Endothelial cell of umbilical vein (primary cell): ENCODE measurements at regions of chr5 and their contacts with region 1.

Region 1: DNA sequence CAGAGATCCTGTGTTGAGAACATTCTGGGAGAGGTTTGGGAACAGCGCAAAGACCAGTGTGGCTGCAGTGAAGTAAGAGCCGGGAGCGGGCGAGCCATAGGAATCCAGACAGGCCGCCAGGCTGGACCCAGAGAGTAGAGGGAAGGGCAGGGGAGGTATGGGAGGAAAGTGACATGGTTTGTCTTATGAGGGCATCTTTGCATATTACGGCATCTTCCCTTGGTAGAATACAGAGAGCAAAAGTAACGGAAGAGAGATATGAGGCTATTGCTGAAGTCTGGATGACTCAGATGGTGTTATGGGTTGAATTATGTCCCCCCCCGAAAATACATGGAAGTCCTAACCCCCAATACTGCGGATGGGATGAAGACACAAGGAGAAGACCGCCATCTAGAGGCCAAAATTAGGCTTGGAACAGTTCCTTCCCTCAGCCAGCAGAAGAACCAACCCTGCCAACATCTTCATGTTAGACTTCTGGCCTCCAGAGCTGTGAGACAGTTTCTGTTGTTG is 268.2 kb downstream of the MAST4 start:
- DNase-seq: peak; percentile 86
- H3K4me3 ChIP-seq: no peak overlapping the region
- H3K27ac ChIP-seq: peak overlapping the region; percentile 19
- H3K4me1 ChIP-seq: peaks cover 42% of the 10 kb centered on the region
- H3K27me3 ChIP-seq: no peaks in the 10 kb centered on the region
- CTCF ChIP-seq: peak; percentile 42 to 67
- POLR2A ChIP-seq: peak; percentile 39

Region 2: GRCh38 chr5:66779528-66779927 is 84.9 kb before region 1 on chr5:
- CTCF ChIA-PET with region 1: no interaction called
- POLR2A ChIA-PET with region 1: no interaction called
- dilution Hi-C with region 1: no loop called
- intact Hi-C with region 1: no loop called
- DNase-seq: no peak
- H3K4me3 ChIP-seq: no peak overlapping the region
- H3K27ac ChIP-seq: no peak overlapping the region
- H3K4me1 ChIP-seq: no peaks in the 10 kb centered on the region
- H3K27me3 ChIP-seq: peaks cover 13 to 14% of the 10 kb centered on the region in 2 experiments
- CTCF ChIP-seq: no peak
- POLR2A ChIP-seq: no peak

Region 3: DNA sequence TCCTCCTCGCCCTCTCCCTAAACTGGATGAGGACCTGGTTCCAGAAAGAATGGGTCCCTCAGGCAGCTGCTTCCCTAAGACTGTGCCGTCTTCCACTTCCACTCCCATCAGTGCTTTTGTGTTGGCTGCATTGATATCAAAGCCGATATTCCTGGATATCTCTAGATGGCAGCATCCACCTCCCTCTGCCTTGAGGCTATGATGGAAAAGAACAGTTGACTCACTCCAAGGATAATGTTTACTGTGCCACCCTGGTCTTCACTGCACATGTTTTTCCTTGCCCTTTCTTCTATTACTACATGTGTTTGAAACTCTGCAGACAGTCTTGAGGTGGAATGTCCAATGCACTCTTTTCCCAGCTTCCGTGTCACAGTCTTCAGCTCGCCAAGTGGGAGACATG is 56.6 kb before region 1 on chr5:
- CTCF ChIA-PET with region 1: interaction called, 123 read pairs
- POLR2A ChIA-PET with region 1: no interaction called
- dilution Hi-C with region 1: no loop called
- intact Hi-C with region 1: loop called (anchors 1 kb)
- DNase-seq: peak; percentile 75
- H3K4me3 ChIP-seq: no peak overlapping the region
- H3K27ac ChIP-seq: no peak overlapping the region
- H3K4me1 ChIP-seq: no peaks in the 10 kb centered on the region
- H3K27me3 ChIP-seq: peaks cover 9 to 10% of the 10 kb centered on the region in 2 experiments
- CTCF ChIP-seq: peak; percentile 62 to 69
- POLR2A ChIP-seq: no peak

Region 4: DNA sequence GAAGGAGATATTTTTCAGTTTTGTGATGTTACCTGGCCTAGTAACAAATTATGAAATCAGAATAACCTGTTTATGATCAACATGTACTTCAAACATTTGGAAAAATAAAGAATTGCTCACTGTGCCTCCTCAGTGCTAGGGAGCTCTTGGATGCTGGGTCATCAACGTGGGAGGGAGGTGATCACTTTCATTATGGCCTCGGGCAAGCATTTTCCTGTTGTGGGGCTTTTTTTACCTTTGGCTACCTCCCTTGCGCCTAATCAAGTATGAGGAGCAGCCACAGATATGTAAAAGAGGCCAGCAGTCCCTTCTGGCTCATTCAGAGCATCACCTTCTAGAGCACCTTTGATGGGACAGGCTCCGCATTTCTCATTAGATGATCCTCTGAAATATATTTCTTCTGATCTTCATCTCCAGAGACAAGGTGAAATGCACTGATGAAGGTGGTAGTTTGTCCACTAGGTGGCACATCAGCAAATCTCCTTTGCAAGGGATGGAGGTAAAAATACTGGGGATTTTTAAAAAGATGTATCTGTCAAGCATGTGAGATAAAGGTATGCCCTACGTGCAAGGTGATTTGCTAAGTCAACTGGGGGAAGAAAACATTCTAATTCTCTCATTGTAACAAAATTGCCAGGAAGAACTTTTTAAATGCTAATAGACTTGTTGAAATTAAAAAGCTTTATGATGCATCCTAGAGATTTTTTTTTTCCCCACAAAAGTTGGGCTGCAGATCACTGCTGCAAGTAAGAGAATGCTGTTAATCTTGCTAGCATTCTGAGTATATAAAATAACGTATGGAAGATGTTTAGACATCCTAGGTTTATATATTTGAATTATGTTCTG is 50.0 kb before region 1 on chr5:
- CTCF ChIA-PET with region 1: interaction called, 123 read pairs
- POLR2A ChIA-PET with region 1: no interaction called
- dilution Hi-C with region 1: no loop called
- intact Hi-C with region 1: loop called (anchors 1 kb)
- DNase-seq: peak; percentile 63
- H3K4me3 ChIP-seq: no peak overlapping the region
- H3K27ac ChIP-seq: no peak overlapping the region
- H3K4me1 ChIP-seq: no peaks in the 10 kb centered on the region
- H3K27me3 ChIP-seq: peaks cover 0 to 2% of the 10 kb centered on the region in 2 experiments
- CTCF ChIP-seq: peak; percentile 62 to 75
- POLR2A ChIP-seq: no peak

Region 5: DNA sequence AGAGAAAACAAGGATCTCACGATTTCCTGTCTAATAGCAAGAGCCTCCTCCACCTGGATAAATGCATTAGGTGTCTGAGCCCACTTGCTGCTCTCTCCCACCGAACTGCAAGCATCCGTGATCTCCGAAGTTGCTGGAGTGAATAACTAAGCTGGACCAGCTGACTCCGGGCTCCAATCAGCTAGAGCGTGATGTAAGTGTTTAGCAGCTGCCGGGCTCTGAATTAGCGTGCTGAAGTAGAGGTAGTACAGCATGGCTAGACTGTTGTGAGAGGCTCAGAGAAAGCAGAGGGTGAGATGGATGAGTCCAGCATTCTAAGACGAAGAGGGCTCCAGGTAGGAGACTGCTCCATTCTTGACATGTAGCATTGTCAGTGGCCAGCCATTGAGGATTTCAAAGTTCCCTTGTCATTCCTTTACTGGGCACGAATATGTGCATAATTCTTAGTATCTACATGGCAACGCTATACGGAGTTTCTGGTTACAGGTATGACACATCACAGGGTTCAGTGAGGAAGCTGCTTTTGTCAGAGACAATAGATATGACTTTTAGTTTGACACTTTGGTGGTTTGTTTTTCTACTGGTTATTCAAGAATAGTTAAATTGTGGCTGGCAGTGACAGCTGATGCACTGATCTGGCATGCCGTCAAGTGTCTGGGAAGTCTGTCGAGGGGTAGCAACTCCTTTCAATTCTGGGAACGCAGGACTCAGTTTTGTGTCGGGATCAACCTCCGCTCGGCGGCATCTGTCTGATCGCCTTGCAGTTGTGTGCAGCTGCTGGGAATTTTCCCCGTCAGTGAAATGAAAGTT is 35.6 kb before region 1 on chr5:
- CTCF ChIA-PET with region 1: interaction called, 11 read pairs
- POLR2A ChIA-PET with region 1: interaction called, 27 read pairs
- dilution Hi-C with region 1: no loop called
- intact Hi-C with region 1: loop called (anchors 1 kb)
- DNase-seq: peak; percentile 92
- H3K4me3 ChIP-seq: peak overlapping the region; percentile 54 to 70 (median 55)
- H3K27ac ChIP-seq: peak overlapping the region; percentile 91
- H3K4me1 ChIP-seq: peaks cover 22% of the 10 kb centered on the region
- H3K27me3 ChIP-seq: no peaks in the 10 kb centered on the region
- CTCF ChIP-seq: no peak
- POLR2A ChIP-seq: peak; percentile 95

Region 6: GRCh38 chr5:66840511-66841013 is 23.8 kb before region 1 on chr5:
- CTCF ChIA-PET with region 1: interaction called, 9 read pairs
- POLR2A ChIA-PET with region 1: no interaction called
- dilution Hi-C with region 1: no loop called
- intact Hi-C with region 1: loop called (anchors 2 kb)
- DNase-seq: no peak
- H3K4me3 ChIP-seq: no peak overlapping the region
- H3K27ac ChIP-seq: no peak overlapping the region
- H3K4me1 ChIP-seq: peaks cover 29% of the 10 kb centered on the region
- H3K27me3 ChIP-seq: no peaks in the 10 kb centered on the region
- CTCF ChIP-seq: no peak
- POLR2A ChIP-seq: no peak

Region 7: GRCh38 chr5:66849803-66850202 is 14.6 kb before region 1 on chr5:
- CTCF ChIA-PET with region 1: interaction called, 12 read pairs
- POLR2A ChIA-PET with region 1: interaction called, 7 read pairs
- dilution Hi-C with region 1: no loop called
- intact Hi-C with region 1: loop called (anchors 1 kb)
- DNase-seq: peak; percentile 54
- H3K4me3 ChIP-seq: no peak overlapping the region
- H3K27ac ChIP-seq: peak overlapping the region; percentile 78
- H3K4me1 ChIP-seq: peaks cover 37% of the 10 kb centered on the region
- H3K27me3 ChIP-seq: no peaks in the 10 kb centered on the region
- CTCF ChIP-seq: no peak
- POLR2A ChIP-seq: no peak

Region 8: GRCh38 chr5:66963559-66963971 is 99.2 kb after region 1 on chr5:
- CTCF ChIA-PET with region 1: no interaction called
- POLR2A ChIA-PET with region 1: no interaction called
- dilution Hi-C with region 1: no loop called
- intact Hi-C with region 1: no loop called
- DNase-seq: no peak
- H3K4me3 ChIP-seq: no peak overlapping the region
- H3K27ac ChIP-seq: no peak overlapping the region
- H3K4me1 ChIP-seq: peaks cover 19% of the 10 kb centered on the region
- H3K27me3 ChIP-seq: no peaks in the 10 kb centered on the region
- CTCF ChIP-seq: no peak
- POLR2A ChIP-seq: no peak

Region 9: GRCh38 chr5:67085616-67086015 is 221.2 kb after region 1 on chr5:
- CTCF ChIA-PET with region 1: no interaction called
- POLR2A ChIA-PET with region 1: no interaction called
- dilution Hi-C with region 1: no loop called
- intact Hi-C with region 1: no loop called
- DNase-seq: no peak
- H3K4me3 ChIP-seq: no peak overlapping the region
- H3K27ac ChIP-seq: no peak overlapping the region
- H3K4me1 ChIP-seq: peaks cover 21% of the 10 kb centered on the region
- H3K27me3 ChIP-seq: no peaks in the 10 kb centered on the region
- CTCF ChIP-seq: no peak
- POLR2A ChIP-seq: no peak